HEK293 (cell line): ENCODE measurements at regions of chr12 and their contacts with region 1.

Region 1: DNA sequence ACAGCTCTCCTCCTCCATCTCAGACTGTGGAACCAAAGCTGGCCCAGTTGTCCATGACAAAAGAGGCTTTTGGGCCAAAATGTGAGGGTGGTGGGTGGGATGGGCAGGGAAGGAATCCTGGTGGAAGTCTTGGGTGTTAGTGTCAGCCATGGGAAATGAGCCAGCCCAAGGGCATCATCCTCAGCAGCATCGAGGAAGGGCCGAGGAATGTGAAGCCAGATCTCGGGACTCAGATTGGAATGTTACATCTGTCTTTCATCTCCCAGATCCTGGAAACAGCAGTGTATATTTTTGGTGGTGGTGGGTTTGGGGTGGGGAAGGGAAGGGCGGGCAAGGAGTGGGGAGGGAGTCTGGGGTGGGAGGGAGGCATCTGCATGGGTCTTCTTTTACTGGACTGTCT is 11.8 kb upstream of the TAMALIN start:
- H3K4me3 ChIP-seq: no peak overlapping the region
- H3K27ac ChIP-seq: no peak overlapping the region
- H3K4me1 ChIP-seq: no peaks in the 10 kb centered on the region
- CTCF ChIP-seq: no peak

Region 2: GRCh38 chr12:51391283-51392162 is 603.4 kb before region 1 on chr12 and contains the start of gene GALNT6:
- CTCF ChIA-PET with region 1: no interaction called
- POLR2A ChIA-PET with region 1: no interaction called
- H3K4me3 ChIP-seq: peak within 1 kb of the TSS; percentile 53
- H3K27ac ChIP-seq: peak within 1 kb of the TSS; percentile 50; the same call in 1 of the 2 replicates
- H3K4me1 ChIP-seq: peaks cover 7% of the 10 kb centered on the region
- CTCF ChIP-seq: no peak

Region 3: DNA sequence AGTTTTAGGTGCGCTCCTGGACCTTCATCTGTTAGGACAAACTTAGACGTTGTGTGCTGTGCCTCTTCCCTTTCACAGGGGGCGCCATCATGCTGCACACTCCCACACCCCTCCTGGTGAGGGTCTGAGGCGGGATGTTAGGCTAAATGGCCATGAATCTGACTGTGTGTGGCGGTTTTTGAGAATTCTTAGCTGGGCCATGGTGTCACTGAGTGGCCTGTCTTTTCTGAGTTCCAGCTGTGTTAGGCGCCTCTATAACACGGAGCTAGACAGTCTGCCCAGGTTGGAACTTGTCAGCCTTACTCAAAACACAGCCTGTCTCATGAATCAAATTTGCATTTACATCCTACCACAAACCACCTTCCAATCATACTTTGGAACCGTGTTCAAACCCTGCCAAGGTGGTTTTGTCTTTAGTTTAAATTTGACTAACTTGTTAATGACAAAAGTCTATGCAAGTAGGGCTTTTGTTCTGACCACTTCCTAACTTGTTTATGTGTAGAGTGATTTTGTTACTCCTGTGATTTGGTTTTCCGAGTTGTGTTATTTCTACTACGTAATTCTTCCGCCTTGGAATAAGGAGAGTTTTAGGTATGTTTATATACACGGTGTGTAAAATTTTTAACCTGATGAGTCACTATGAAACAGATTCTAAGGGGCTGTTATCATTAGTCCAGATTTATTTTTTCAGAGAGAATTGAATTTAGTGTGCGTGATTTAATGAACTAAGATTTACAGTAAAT is 23.9 kb before region 1 on chr12:
- CTCF ChIA-PET with region 1: interaction called, 47 read pairs
- POLR2A ChIA-PET with region 1: no interaction called
- H3K4me3 ChIP-seq: no peak overlapping the region; the same call in 1 of the 2 replicates
- H3K27ac ChIP-seq: no peak overlapping the region
- H3K4me1 ChIP-seq: peaks cover 20% of the 10 kb centered on the region
- CTCF ChIP-seq: peak; percentile 32; the same call in 1 of the 2 replicates

Region 4: GRCh38 chr12:51980051-51980808 is 14.7 kb before region 1 on chr12:
- CTCF ChIA-PET with region 1: interaction called, 22 read pairs
- POLR2A ChIA-PET with region 1: no interaction called
- H3K4me3 ChIP-seq: no peak overlapping the region
- H3K27ac ChIP-seq: no peak overlapping the region
- H3K4me1 ChIP-seq: no peaks in the 10 kb centered on the region
- CTCF ChIP-seq: peak; percentile 75

Region 5: GRCh38 chr12:52032804-52033502 is 38.0 kb after region 1 on chr12:
- CTCF ChIA-PET with region 1: interaction called, 349 read pairs
- POLR2A ChIA-PET with region 1: no interaction called
- H3K4me3 ChIP-seq: 0 out of 2 replicates have a peak overlapping the region, but pooled peaks have one; percentile 9
- H3K27ac ChIP-seq: no peak overlapping the region; the same call in 1 of the 2 replicates
- H3K4me1 ChIP-seq: peaks cover 13% of the 10 kb centered on the region
- CTCF ChIP-seq: no peak

Region 6: GRCh38 chr12:52069327-52070184 is 74.6 kb after region 1 on chr12 and contains the start of gene ATG101:
- CTCF ChIA-PET with region 1: interaction called, 11 read pairs
- POLR2A ChIA-PET with region 1: no interaction called
- H3K4me3 ChIP-seq: peak within 1 kb of the TSS; percentile 87
- H3K27ac ChIP-seq: peak within 1 kb of the TSS; percentile 92
- H3K4me1 ChIP-seq: 0 out of 2 replicates have a peak, but pooled peaks cover 7% of the 10 kb centered on the region
- CTCF ChIP-seq: peak; percentile 98

Region 7: DNA sequence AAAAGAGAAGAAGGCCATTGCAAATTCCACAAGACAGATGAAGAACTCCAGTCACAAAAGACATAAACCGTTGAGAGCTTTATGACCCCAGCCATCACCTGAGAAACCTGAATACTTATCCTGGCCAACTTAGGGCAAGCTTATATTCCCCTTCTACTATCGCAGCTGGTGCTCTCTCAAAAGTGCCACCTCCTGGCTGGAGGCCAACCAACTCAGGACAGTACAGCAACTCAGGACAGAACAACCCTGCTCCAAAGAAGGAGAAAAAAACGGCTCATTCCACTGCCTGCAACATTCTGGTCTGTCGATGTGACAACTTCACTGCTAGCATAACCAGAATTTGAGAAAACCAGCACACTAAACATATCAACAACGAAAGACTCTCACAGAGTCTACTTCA is 466.7 kb after region 1 on chr12:
- CTCF ChIA-PET with region 1: no interaction called
- POLR2A ChIA-PET with region 1: no interaction called
- H3K4me3 ChIP-seq: no peak overlapping the region
- H3K27ac ChIP-seq: no peak overlapping the region
- H3K4me1 ChIP-seq: no peaks in the 10 kb centered on the region
- CTCF ChIP-seq: no peak